ENCODE measurements at regions of chr13 and their contacts with region 1.

Region 1: DNA sequence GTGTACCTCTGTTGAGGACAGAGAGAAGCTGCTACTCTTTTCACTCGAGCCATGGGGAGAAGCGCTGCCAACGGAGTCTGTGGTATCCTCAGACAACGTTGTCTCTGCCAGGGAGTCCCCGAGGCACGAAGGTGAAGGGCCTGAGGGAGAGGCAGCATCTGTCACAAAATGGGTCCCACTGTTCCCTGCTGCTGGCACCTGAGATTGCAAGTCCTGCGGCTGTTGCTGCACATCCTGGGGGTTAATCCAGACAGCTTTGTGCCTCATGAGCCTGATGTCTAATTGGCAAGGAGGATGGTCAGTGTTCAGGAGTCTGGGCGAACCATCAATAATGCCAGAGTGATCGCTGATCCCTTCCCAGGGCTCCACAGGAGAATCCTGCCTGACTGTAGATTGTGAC is 15.0 kb downstream of the RUBCNL start:
- DNase-seq: no peak
- H3K27ac ChIP-seq: no peak overlapping the region
- CTCF ChIP-seq: no peak

Region 2: DNA sequence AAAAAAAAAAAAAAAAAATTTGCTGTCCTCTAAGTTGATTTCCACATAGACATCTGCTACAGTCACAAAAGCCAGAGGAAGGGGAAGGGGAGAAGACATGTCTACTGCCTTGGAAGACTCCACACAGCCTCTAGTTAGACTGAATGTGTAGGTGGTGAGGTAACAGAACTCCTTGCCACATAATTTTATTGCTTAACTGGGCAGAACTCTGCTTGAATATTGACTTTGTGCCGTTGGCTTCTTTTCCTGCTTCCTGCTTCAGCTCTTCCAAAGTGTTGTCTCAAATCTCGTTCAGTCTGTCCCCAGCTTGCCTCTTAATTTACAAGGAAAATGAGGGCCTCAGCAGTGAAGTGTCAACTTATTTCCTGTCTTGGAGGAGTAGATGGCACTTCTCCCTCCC is 387.8 kb after region 1 on chr13:
- CTCF ChIA-PET with region 1: interaction called, 12 read pairs
- POLR2A ChIA-PET with region 1: no interaction called
- DNase-seq: no peak
- H3K27ac ChIP-seq: no peak overlapping the region
- CTCF ChIP-seq: no peak

Region 3: DNA sequence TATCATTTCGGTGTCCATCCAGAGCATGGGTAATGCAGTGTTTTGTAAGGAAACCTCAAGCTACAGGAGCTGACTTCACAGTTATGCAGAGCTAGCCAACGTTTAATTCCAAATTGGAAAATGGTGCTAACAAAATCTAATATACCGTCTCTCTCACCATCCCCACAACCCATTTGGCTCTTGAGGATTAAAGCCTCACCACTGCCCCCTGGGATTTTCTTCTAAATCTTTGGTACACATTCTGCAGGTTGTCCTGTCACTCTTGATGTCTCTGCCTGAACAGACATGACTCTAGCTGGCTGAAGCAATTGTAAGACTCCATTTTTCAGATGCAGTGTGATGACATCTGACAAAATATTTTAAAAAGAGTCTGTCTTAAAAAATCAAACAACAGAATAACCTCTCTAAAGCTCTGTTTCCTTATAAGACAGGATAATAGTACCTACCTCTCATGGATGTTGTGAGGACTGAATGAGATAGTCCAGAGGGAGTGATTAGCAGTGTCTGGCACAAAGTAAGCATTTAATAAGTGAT is 1177.2 kb after region 1 on chr13:
- CTCF ChIA-PET with region 1: no interaction called
- POLR2A ChIA-PET with region 1: no interaction called
- DNase-seq: no peak
- H3K27ac ChIP-seq: no peak overlapping the region
- CTCF ChIP-seq: no peak

Measured in RWPE1 (cell line).